ENCODE measurements at regions of chr1 and their contacts with region 1.

Region 1: GRCh38 chr1:110209715-110210603 is at the start of gene KCNC4:
- DNase-seq: peak; percentile 95
- ATAC-seq: peak; percentile 88
- H3K4me3 Mint-ChIP-seq: peak within 1 kb of the TSS; percentile 82
- H3K27ac Mint-ChIP-seq: peak within 1 kb of the TSS; percentile 81
- H3K4me1 Mint-ChIP-seq: peaks cover 49% of the 10 kb centered on the region
- H3K27me3 Mint-ChIP-seq: no peaks in the 10 kb centered on the region
- total RNA-seq, gene KCNC4: 13.9 to 14.3 TPM

Region 2: GRCh38 chr1:110048240-110048639 is 161.7 kb before region 1 on chr1:
- CTCF ChIA-PET with region 1: no interaction called
- POLR2A ChIA-PET with region 1: no interaction called
- intact Hi-C with region 1: no loop called
- DNase-seq: no peak
- ATAC-seq: no peak
- H3K4me3 Mint-ChIP-seq: no peak overlapping the region
- H3K27ac Mint-ChIP-seq: no peak overlapping the region
- H3K4me1 Mint-ChIP-seq: no peaks in the 10 kb centered on the region
- H3K27me3 Mint-ChIP-seq: no peaks in the 10 kb centered on the region

Region 3: DNA sequence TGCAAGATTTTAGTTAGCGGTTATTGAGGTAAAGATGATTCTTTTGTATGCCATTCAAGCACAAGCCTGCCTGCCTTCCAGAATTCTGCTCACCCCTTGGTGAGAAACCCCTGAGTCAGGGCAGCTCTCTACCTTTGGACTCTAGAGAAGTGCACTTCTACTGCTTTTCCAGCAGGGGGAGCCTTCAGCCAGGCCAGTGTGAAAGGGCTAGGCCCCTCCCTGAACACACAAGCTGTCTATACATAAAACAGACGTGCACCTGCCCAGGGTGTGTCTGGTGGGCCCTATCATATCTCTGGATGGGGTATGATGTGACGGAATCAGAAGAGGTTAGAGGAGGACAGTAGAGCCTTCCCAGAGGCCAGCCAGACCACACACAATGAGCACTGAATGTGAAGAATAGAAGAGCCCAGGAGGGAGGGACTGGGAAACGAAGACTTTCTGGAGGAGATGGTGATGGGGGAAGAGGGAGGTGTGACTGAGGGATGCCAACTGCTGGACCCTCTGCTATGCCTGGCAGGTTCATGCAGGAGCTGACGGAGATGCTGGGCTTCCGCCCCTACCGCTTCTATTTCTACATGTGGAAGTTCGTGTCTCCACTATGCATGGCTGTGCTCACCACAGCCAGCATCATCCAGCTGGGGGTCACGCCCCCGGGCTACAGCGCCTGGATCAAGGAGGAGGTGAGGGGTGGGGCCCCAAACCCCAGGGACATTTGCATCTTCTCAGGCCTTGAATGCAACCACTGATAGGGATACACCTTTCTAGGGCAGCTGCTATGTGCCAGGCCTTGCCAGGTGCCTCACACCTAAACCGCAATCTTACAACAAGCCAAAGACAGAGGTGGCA is 12.8 kb before region 1 on chr1:
- CTCF ChIA-PET with region 1: interaction called, 35 read pairs
- POLR2A ChIA-PET with region 1: no interaction called
- intact Hi-C with region 1: no loop called
- DNase-seq: peak; percentile 77
- ATAC-seq: peak; percentile 97
- H3K4me3 Mint-ChIP-seq: no peak overlapping the region
- H3K27ac Mint-ChIP-seq: no peak overlapping the region
- H3K4me1 Mint-ChIP-seq: no peaks in the 10 kb centered on the region
- H3K27me3 Mint-ChIP-seq: no peaks in the 10 kb centered on the region

Region 4: GRCh38 chr1:110245876-110246620 is 36.1 kb after region 1 on chr1:
- CTCF ChIA-PET with region 1: interaction called, 19 read pairs
- POLR2A ChIA-PET with region 1: no interaction called
- intact Hi-C with region 1: no loop called
- DNase-seq: no peak
- ATAC-seq: no peak
- H3K4me3 Mint-ChIP-seq: no peak overlapping the region
- H3K27ac Mint-ChIP-seq: no peak overlapping the region
- H3K4me1 Mint-ChIP-seq: peaks cover 10% of the 10 kb centered on the region
- H3K27me3 Mint-ChIP-seq: no peaks in the 10 kb centered on the region

Region 5: DNA sequence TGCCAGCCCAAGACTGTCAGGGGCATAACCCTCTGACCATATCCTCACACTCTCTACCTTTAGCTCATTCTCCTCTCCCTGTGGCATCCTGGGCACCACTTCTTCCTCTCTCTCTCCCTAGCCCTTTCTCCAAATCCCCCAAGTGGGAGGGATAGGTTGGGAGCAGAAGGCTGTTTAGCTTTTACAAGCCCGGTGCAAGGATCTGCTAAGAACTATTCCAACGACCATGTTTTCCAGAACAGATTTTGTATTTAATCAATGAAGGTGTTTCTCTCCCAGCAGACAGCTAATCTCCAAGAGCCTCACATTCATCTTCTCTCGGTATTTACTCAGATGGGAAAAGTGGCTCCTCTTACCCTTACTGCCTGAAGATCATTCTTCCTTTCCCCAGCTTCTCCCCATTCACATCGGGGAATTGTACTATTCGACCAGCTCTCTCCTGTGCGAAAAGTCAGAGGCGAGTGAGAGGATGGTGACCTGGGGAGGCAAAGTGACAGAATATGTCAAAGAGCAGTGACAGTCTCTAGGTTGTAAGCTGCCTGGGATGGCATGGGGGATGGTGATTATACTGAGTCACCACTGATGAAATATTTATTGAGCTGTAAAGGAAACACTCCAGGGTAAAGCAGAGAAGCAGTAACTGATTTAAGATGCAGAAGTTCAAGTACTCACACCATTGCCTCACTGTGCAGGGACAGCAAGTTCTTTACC is 82.2 kb after region 1 on chr1:
- CTCF ChIA-PET with region 1: interaction called, 14 read pairs
- POLR2A ChIA-PET with region 1: interaction called, 3 read pairs
- intact Hi-C with region 1: no loop called
- DNase-seq: peak; percentile 10
- ATAC-seq: no peak
- H3K4me3 Mint-ChIP-seq: no peak overlapping the region
- H3K27ac Mint-ChIP-seq: no peak overlapping the region
- H3K4me1 Mint-ChIP-seq: no peaks in the 10 kb centered on the region
- H3K27me3 Mint-ChIP-seq: no peaks in the 10 kb centered on the region

Region 6: DNA sequence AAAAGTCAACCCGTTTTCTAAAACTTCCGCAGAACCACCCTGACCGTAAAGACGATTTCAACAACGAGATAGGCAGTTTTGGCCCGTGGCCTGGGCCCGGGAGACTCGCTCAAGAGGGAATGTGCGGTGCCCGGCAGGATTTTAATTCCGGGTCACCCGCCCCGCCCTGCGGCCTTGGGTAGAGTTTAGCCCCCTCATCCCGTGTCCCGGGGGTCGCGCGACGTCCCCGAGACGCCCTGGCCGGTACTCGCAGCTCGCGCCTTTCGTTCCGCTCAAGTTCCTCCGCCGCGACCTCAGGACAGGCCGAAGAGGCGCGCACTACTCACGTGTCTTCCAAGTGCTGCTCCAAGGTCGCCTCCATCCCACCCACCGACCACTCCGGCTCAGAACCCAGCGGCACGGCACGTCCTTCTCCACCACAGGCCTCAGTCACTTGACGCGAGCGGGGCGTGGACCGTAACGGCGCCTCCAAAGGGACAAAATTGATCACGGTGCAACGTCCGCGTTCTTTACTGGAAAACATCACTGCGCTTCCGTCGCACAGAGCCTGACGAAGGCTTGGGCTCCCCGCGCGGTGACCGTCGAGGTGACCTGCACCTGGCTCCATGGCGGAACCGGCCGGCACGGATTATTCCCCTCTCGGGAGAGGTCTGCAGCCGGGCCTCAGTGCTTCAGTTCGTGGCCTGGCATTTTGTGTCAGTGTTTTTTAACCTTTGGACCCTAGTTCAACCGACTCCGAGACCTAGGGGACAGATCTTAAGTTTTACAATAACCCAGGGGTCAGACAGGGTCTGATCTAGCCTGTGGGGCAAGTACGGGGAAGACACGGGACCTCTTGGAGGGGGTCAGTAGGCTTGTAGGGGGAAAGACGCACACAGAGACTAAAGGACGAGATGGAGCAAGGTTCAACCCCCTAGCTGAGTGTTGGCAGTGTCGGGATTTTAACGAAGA is 197.6 kb after region 1 on chr1 and contains the start of gene LAMTOR5:
- CTCF ChIA-PET with region 1: interaction called, 6 read pairs
- POLR2A ChIA-PET with region 1: no interaction called
- intact Hi-C with region 1: loop called (anchors 1 to 2 kb)
- DNase-seq: peak; percentile 95
- ATAC-seq: peak; percentile 93
- H3K4me3 Mint-ChIP-seq: peak within 1 kb of the TSS; percentile 98
- H3K27ac Mint-ChIP-seq: peak within 1 kb of the TSS; percentile 100
- H3K4me1 Mint-ChIP-seq: peaks cover 17% of the 10 kb centered on the region
- H3K27me3 Mint-ChIP-seq: no peaks in the 10 kb centered on the region
- total RNA-seq, gene LAMTOR5: 141 to 155 TPM

Region 7: DNA sequence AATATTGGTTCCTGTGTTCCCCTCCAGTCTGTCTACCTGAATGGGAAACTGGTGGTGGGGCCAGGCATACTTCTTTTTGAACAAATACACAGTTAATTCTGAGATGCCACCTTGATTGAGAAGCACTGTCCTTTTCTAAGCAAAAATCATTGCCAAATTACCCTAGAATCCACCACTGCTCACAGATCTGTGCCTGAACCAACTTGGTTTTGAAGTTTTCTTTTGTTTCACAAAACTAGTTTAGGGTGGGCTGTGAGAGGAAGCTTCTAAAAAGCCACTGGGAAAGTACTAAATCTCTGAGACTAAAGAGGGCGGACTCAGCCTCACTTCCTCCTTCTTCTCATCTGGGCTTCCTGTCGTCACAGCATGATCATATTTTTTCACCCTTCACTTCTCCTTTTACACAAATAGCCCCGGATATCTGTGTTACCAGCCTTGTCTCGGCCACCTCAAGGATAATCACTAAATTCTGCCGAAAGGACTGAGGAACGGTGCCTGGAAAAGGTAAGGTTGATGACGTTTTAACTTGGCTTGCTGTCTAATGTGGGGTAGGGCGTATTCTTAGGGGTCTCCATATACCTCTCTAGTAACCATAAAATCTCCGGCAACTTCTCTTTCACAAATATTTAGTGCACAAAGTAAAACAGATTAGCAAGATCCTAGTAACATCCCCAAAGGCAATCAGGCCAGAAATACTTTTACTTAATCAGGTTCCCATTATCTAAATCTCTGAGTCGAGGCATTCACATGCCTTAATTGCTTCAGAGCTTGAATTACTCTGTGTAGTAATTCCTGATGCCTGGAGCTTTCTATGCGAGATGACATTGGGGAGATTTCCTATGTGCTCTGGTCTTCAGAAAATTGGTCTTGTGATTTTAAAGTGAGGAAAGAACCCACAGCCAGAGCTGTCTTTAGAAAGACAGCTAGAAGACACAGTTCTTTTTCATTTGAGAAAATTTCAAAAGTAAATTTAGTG is 663.1 kb after region 1 on chr1 and contains the start of gene CD53:
- CTCF ChIA-PET with region 1: no interaction called
- POLR2A ChIA-PET with region 1: no interaction called
- intact Hi-C with region 1: loop called in 1 of 2 experiments (anchors 2 kb)
- DNase-seq: peak; percentile 62
- ATAC-seq: peak; percentile 33
- H3K4me3 Mint-ChIP-seq: peak within 1 kb of the TSS; percentile 85
- H3K27ac Mint-ChIP-seq: peak within 1 kb of the TSS; percentile 95
- H3K4me1 Mint-ChIP-seq: peaks cover 39% of the 10 kb centered on the region
- H3K27me3 Mint-ChIP-seq: no peaks in the 10 kb centered on the region
- total RNA-seq, gene CD53: 238 to 244 TPM